GM12878 (cell line): ENCODE measurements at regions of chr5 and their contacts with region 1.

Region 1: DNA sequence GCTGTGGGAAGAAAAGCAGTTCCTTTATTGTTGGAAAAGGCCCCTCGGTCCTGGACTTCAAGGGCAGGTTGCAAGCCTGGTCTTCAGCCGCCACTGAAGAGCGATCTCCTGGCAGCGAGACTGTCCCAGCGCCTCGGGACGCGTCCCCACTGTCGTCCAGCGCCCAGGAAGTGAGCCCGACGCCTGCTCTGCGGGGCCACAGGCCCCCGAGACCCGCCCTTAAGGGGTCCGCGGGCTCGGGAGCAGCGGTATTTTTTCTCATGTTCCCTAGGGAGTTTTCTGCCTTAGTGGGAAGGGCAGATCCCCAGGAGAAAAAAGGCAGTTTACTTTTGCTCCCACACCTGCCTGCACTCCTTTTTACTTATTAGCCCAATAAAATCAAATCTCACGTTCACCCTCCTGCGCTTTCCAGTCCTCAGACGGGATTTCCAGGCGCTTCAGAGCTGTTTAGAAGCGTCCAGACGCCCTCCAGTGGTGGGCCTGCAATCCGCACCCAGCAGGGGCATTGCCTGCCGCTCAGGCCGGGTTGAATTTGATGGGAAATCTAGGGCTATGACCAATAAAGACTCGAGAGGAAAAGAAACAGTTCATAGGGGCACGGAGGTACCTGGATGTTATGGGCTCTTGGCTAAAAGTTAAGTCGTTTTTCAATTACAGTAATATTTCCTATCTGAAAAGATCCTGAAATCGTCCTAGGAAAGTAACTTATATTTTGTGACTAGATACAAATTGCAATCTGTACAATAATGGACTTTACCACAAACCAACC is 2.8 kb upstream of the EFNA5 start:
- DNase-seq: peak; percentile 59
- ATAC-seq: peak; percentile 72
- H3K4me3 ChIP-seq: peak overlapping the region; percentile 69
- H3K27ac ChIP-seq: peak overlapping the region; percentile 26; the same call in 1 of the 2 replicates
- H3K4me1 ChIP-seq: peaks cover 10% of the 10 kb centered on the region
- H3K27me3 ChIP-seq: peaks cover 0 to 4% of the 10 kb centered on the region in 2 experiments; a peak in 2 of 4 replicates
- CTCF ChIP-seq: peak; percentile 96 to 99 (median 97)
- EP300 ChIP-seq: no peak
- POLR2A ChIP-seq: no peak
- RAD21 ChIP-seq: peak; percentile 98

Region 2: DNA sequence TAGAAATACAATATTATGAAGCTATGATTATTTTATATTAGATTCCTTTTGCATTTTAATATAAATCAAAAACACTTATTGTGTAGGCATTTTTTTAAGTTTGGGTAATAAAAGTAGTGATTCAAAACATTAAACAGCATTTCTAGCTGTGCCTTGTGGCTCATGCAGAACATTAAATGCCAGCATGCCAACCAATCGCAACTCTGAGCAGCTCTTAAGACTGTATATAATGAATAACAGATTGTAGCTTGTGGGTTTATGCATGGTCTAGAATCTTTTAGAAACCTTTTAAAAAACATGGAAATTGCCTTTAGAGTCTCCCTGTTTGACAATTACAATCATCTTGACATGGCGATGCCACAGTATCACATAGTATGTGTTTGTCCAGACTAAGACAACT is 906.6 kb before region 1 on chr5:
- CTCF ChIA-PET with region 1: no interaction called
- POLR2A ChIA-PET with region 1: no interaction called
- RAD21 ChIA-PET with region 1: no interaction called
- SMC1A ChIA-PET with region 1: no interaction called
- in situ Hi-C with region 1: no loop called
- intact Hi-C with region 1: no loop called
- DNase-seq: no peak
- ATAC-seq: no peak
- H3K4me3 ChIP-seq: no peak overlapping the region
- H3K27ac ChIP-seq: no peak overlapping the region
- H3K4me1 ChIP-seq: no peaks in the 10 kb centered on the region
- H3K27me3 ChIP-seq: no peaks in the 10 kb centered on the region
- CTCF ChIP-seq: no peak
- EP300 ChIP-seq: no peak
- POLR2A ChIP-seq: no peak
- RAD21 ChIP-seq: no peak

Region 3: GRCh38 chr5:106875591-106876297 is 797.8 kb before region 1 on chr5:
- CTCF ChIA-PET with region 1: no interaction called
- POLR2A ChIA-PET with region 1: no interaction called
- RAD21 ChIA-PET with region 1: no interaction called
- SMC1A ChIA-PET with region 1: no interaction called
- in situ Hi-C with region 1: no loop called
- intact Hi-C with region 1: loop called (anchors 10 kb)
- DNase-seq: no peak
- ATAC-seq: peak; percentile 94
- H3K4me3 ChIP-seq: no peak overlapping the region
- H3K27ac ChIP-seq: no peak overlapping the region
- H3K4me1 ChIP-seq: no peaks in the 10 kb centered on the region
- H3K27me3 ChIP-seq: no peaks in the 10 kb centered on the region
- CTCF ChIP-seq: peak; percentile 59 to 69 (median 61)
- EP300 ChIP-seq: no peak
- POLR2A ChIP-seq: no peak
- RAD21 ChIP-seq: peak; percentile 77

Region 4: GRCh38 chr5:107289030-107289714 is 384.4 kb before region 1 on chr5:
- CTCF ChIA-PET with region 1: no interaction called
- POLR2A ChIA-PET with region 1: no interaction called
- RAD21 ChIA-PET with region 1: interaction called, 6 read pairs
- SMC1A ChIA-PET with region 1: interaction called, 3 read pairs
- in situ Hi-C with region 1: no loop called
- intact Hi-C with region 1: loop called (anchors 5 kb)
- DNase-seq: peak; percentile 91
- ATAC-seq: peak; percentile 94
- H3K4me3 ChIP-seq: no peak overlapping the region
- H3K27ac ChIP-seq: peak overlapping the region; percentile 14; the same call in 1 of the 2 replicates
- H3K4me1 ChIP-seq: peaks cover 23% of the 10 kb centered on the region
- H3K27me3 ChIP-seq: no peaks in the 10 kb centered on the region; a peak in 1 of 4 replicates
- CTCF ChIP-seq: no peak
- EP300 ChIP-seq: peak; percentile 92 to 95
- POLR2A ChIP-seq: no peak
- RAD21 ChIP-seq: no peak

Region 5: DNA sequence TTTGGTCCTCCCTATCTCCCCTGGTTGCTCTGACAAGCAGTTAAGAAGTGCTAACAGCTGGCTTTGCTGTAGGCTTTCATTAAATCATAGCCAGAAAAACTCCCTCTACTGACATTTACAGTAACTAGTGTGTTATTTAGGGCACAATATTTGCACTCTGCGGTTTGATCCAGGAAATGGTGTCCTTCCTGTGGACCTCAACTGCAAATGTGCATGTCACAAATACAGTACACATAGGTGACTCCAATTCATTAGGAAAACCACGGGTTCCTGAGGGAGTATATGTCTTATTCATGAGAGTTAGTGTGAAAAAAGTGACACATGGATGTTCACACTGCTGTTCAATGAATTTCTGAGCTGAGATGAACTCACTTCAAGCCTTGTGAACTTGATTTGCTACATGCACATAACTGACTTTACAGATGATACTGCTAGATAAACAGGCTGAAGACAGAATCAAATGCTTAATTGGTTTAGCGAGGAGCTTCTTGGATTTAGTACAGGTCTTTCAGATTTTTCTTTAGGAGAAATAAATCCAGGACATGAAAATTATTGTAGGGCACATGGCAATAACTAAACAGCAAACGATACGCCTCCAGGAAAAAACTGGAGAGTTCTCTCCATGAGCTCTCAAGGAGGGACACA is 284.3 kb before region 1 on chr5:
- CTCF ChIA-PET with region 1: interaction called, 6 read pairs
- POLR2A ChIA-PET with region 1: no interaction called
- RAD21 ChIA-PET with region 1: no interaction called
- SMC1A ChIA-PET with region 1: interaction called, 4 read pairs
- in situ Hi-C with region 1: no loop called
- intact Hi-C with region 1: loop called (anchors 2 kb)
- DNase-seq: peak; percentile 92
- ATAC-seq: peak; percentile 82
- H3K4me3 ChIP-seq: peak overlapping the region; percentile 43
- H3K27ac ChIP-seq: peak overlapping the region; percentile 69
- H3K4me1 ChIP-seq: peaks cover 22% of the 10 kb centered on the region
- H3K27me3 ChIP-seq: no peaks in the 10 kb centered on the region
- CTCF ChIP-seq: peak in 1 of 3 experiments; percentile 27; a peak in 1 of 6 replicates
- EP300 ChIP-seq: peak; percentile 89 to 90; a peak in 2 of 4 replicates
- POLR2A ChIP-seq: no peak
- RAD21 ChIP-seq: peak; percentile 50

Region 6: DNA sequence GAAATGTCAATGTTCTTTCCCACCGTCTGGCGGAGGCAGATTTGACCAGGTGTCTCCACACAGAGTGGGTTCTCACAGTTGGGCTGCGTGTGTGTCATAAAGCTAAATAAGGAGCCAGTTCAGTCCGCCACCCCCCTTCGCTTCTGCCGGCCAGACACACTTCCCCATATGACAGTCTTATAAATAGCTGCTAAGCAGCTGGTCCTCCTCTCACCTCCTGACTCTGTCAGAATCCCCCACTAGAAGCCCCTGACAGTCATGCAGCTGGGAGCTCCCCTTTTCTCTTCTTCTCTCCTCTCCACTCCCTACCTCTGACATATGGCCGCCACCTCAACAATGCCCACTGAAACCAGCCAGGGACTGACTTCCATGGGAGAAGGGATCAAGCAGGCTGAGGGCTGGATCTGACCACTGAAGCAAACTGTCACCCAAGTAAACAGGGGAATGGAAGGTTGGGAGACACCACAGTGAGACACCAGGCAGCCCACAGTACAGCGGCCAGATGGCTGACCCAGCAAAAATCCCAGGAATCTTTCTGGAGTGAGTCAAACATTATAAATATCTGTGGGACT is 139.1 kb after region 1 on chr5:
- CTCF ChIA-PET with region 1: interaction called, 7 read pairs
- POLR2A ChIA-PET with region 1: interaction called, 3 read pairs
- RAD21 ChIA-PET with region 1: interaction called, 8 read pairs
- SMC1A ChIA-PET with region 1: interaction called, 5 read pairs
- in situ Hi-C with region 1: no loop called
- intact Hi-C with region 1: loop called (anchors 1 kb)
- DNase-seq: peak; percentile 79
- ATAC-seq: peak; percentile 88
- H3K4me3 ChIP-seq: peak overlapping the region; percentile 44; the same call in 1 of the 2 replicates
- H3K27ac ChIP-seq: peak overlapping the region; percentile 78
- H3K4me1 ChIP-seq: peaks cover 29% of the 10 kb centered on the region
- H3K27me3 ChIP-seq: no peaks in the 10 kb centered on the region
- CTCF ChIP-seq: no peak
- EP300 ChIP-seq: peak; percentile 86 to 96
- POLR2A ChIP-seq: no peak
- RAD21 ChIP-seq: peak; percentile 30; the same call in 1 of the 2 replicates